Prostate gland (tissue), 2 donors: ENCODE measurements at regions of chr5 and their contacts with region 1.

Region 1: GRCh38 chr5:134465816-134466240 is 54.1 kb upstream of the CDKN2AIPNL start:
- DNase-seq: peak; percentile 87
- H3K4me3 ChIP-seq: peak overlapping the region; percentile 26 to 40
- H3K27ac ChIP-seq: peak overlapping the region; percentile 88 to 92
- H3K4me1 ChIP-seq: peaks cover 6% of the 10 kb centered on the region
- H3K27me3 ChIP-seq: no peaks in the 10 kb centered on the region
- CTCF ChIP-seq: no peak
- POLR2A ChIP-seq: peak; percentile 68

Region 2: DNA sequence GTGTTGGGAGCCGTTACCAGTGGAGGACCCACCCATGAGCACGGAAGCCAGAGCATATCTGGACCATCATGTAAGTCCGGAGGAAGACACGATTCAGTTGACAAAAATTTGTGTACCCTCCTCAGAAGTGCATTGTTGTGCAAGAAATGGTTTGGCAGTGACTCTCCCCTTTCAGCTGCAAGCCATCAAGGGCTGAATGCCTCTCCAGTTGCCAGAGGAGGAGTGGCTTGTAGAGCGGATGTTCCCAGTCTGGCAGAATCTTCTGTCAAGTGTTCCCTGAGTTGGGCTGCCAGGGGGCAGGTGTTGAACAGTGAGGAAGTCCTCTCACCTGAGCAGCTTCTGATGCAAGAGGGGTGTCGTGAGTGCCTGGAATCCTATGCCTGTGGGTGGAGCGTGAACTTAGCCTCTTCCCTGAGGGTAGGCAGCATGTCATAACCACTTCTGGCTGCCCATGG is 26.6 kb before region 1 on chr5:
- intact Hi-C with region 1: loop called (anchors 2 kb)
- DNase-seq: peak; percentile 95
- H3K4me3 ChIP-seq: no peak overlapping the region
- H3K27ac ChIP-seq: peak overlapping the region; percentile 20 to 64
- H3K4me1 ChIP-seq: peaks cover 15% of the 10 kb centered on the region
- H3K27me3 ChIP-seq: no peaks in the 10 kb centered on the region
- CTCF ChIP-seq: peak in 2 of 4 experiments; percentile 29 to 34
- POLR2A ChIP-seq: no peak

Region 3: DNA sequence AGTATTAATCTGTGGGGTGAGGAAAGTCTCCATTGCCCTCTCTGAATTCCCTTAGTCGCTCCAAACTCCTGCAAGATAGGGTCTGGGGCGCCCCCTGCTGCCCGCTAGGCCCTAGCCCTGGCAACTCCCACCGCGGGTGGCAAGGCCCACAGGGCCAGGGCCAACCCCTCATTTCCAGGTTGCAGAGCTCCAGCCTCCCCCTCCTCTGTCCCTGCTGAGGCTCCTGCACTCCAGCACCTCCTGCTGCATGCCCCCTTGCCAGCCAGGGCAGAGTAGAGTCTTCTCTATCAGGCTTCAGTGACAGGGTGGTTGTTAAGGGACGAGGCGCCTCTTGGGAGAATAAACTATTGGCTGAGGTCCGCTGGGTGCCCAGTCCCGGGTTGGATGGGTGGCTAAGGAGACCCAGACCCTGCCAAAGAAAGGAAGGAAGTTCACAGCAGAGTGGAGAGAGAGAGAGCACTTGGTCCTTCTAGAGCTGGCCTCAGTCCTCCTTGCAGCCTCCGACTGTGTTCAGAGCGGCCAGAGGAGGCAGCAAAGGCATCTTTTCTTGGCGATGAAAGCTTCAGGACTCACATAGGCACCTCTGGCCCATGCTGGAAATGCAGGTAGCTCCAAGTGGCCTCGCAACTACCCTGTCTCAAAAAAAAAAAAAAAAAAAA is 121.2 kb after region 1 on chr5:
- intact Hi-C with region 1: no loop called
- DNase-seq: peak; percentile 63
- H3K4me3 ChIP-seq: no peak overlapping the region
- H3K27ac ChIP-seq: no peak overlapping the region
- H3K4me1 ChIP-seq: no peaks in the 10 kb centered on the region
- H3K27me3 ChIP-seq: no peaks in the 10 kb centered on the region
- CTCF ChIP-seq: peak; percentile 56 to 74 (median 65)
- POLR2A ChIP-seq: no peak

Region 4: DNA sequence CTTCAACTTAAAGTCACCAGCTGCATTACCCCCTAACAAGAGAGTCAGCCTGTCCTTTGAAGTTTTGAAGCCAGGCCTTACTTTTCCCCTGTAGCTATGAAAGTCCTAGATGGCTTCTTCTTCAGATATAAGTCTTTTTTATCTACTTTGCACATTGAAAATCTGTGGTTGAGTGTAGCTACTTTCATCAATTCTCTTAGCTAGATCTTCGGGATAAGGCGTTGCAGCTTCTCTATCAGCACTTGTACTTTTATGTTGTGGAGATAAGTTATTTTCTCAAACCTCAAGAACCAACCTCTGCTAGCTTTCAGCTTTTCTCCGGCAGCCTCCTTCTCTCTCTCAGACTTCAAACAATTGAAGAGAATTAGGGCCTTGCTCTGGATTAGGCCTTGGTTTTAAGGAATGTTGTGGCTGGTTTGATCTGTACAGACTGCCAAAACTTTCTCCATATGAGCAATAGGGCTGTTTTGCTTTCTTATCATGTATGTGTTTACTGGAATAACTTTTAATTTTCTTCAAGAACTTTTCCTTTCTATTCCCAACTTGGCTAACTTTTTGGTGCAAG is 523.5 kb after region 1 on chr5:
- intact Hi-C with region 1: no loop called
- DNase-seq: no peak
- H3K4me3 ChIP-seq: no peak overlapping the region
- H3K27ac ChIP-seq: no peak overlapping the region
- H3K4me1 ChIP-seq: no peaks in the 10 kb centered on the region
- H3K27me3 ChIP-seq: no peaks in the 10 kb centered on the region
- CTCF ChIP-seq: no peak
- POLR2A ChIP-seq: no peak